PC-9 (cell line): ENCODE measurements at regions of chr3 and their contacts with region 1.

Region 1: GRCh38 chr3:169348929-169349613 is 314.4 kb downstream of the MECOM start:
- DNase-seq: peak; percentile 52 to 92
- H3K4me3 ChIP-seq: peak overlapping the region; percentile 14; the same call in 1 of the 2 replicates
- H3K27ac ChIP-seq: peak overlapping the region; percentile 95
- H3K4me1 ChIP-seq: peaks cover 51% of the 10 kb centered on the region
- H3K27me3 ChIP-seq: no peaks in the 10 kb centered on the region
- CTCF ChIP-seq: no peak

Region 2: GRCh38 chr3:169305460-169305859 is 43.6 kb before region 1 on chr3:
- CTCF ChIA-PET with region 1: no interaction called
- POLR2A ChIA-PET with region 1: no interaction called
- intact Hi-C with region 1: no loop called
- DNase-seq: peak in 1 of 2 experiments; percentile 47
- H3K4me3 ChIP-seq: no peak overlapping the region
- H3K27ac ChIP-seq: no peak overlapping the region
- H3K4me1 ChIP-seq: peaks cover 15% of the 10 kb centered on the region
- H3K27me3 ChIP-seq: no peaks in the 10 kb centered on the region
- CTCF ChIP-seq: no peak

Region 3: GRCh38 chr3:169323578-169324451 is 25.3 kb before region 1 on chr3:
- CTCF ChIA-PET with region 1: interaction called, 3 read pairs
- POLR2A ChIA-PET with region 1: interaction called, 5 read pairs
- intact Hi-C with region 1: loop called (anchors 1 kb)
- DNase-seq: no peak
- H3K4me3 ChIP-seq: no peak overlapping the region
- H3K27ac ChIP-seq: no peak overlapping the region
- H3K4me1 ChIP-seq: peaks cover 70% of the 10 kb centered on the region
- H3K27me3 ChIP-seq: no peaks in the 10 kb centered on the region
- CTCF ChIP-seq: no peak

Region 4: DNA sequence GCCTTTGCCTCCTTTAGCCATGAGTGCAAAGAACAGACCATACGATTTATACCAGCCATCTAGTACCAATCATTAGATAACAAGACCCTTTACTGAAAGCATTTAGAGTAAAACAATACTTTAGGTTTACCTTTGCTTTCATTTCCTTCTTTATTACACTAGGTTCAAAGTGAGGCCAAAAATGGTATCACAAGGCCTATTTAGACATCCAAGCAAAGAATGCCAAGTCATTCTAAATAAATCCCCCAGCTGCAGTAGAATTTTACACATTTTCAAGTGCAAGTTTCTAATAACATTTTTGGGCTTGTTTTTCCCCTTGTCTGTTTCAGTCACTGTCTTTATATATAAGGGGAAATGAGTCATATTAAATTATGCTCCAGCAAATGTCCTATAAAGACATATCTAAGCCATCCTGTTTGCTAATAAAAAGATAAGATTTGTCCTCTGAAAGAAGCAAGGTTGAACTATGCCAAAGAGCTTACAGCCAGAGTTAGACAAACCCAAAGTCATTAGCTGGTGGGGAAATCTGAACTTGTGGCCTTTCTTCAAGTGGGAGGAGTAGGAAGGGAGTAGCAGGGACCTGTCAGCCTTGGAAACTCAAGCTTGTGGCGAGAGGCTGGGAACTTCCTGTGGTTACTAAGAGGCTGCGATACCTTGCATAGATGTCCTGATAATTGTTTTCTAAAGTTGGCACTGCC is 81.8 kb after region 1 on chr3:
- CTCF ChIA-PET with region 1: no interaction called
- POLR2A ChIA-PET with region 1: no interaction called
- intact Hi-C with region 1: loop called (anchors 5 kb)
- DNase-seq: peak; percentile 68 to 98
- H3K4me3 ChIP-seq: peak overlapping the region; percentile 3; the same call in 1 of the 2 replicates
- H3K27ac ChIP-seq: peak overlapping the region; percentile 88
- H3K4me1 ChIP-seq: peaks cover 48% of the 10 kb centered on the region
- H3K27me3 ChIP-seq: no peaks in the 10 kb centered on the region
- CTCF ChIP-seq: no peak